MCF 10A (cell line): ENCODE measurements at regions of chr16 and their contacts with region 1.

Region 1: DNA sequence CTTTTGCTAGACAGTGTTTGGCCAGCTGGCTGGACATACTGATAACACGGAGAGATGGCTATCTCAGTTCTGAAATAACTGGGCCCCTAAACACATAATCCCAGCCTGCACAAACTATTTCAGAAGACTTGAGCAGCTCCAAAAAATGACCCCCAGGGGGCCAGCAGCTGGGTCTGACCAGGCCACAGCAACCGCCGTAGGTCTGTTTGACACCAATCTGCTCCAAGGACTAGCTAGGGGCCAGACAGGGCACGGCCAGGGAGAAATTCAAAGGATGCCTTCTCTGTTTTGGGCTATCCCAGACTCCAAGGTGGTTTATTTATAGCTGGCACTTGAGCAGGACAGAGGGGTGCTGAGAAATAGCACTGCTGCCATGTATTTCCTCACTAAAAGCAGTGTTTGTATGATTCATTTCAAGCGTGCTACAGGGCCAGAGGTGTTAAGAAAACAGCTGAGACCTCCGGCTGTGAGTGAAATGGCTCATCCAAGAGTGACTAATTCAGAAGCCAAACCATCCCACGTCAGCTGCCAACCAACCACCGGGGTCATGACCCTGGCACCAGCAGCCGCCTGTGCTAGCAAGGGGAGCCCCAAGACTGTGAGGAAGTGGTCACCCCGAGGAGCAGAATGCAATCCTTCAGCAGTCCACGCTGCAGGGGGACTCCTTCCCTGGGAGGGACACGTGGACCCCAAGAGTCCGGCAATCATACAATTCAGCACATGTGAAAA is 5.7 kb downstream of the GGA2 start:
- DNase-seq: peak; percentile 98
- H3K4me3 Mint-ChIP-seq: no peak overlapping the region
- H3K27ac Mint-ChIP-seq: peak overlapping the region; percentile 75
- H3K4me1 Mint-ChIP-seq: peaks cover 41% of the 10 kb centered on the region
- H3K27me3 Mint-ChIP-seq: no peaks in the 10 kb centered on the region
- CTCF ChIP-seq: no peak

Region 2: GRCh38 chr16:23398987-23399805 is 105.4 kb before region 1 on chr16:
- CTCF ChIA-PET with region 1: no interaction called
- POLR2A ChIA-PET with region 1: no interaction called
- intact Hi-C with region 1: no loop called
- DNase-seq: no peak
- H3K4me3 Mint-ChIP-seq: no peak overlapping the region
- H3K27ac Mint-ChIP-seq: no peak overlapping the region
- H3K4me1 Mint-ChIP-seq: peaks cover 4% of the 10 kb centered on the region
- H3K27me3 Mint-ChIP-seq: no peaks in the 10 kb centered on the region
- CTCF ChIP-seq: no peak

Region 3: DNA sequence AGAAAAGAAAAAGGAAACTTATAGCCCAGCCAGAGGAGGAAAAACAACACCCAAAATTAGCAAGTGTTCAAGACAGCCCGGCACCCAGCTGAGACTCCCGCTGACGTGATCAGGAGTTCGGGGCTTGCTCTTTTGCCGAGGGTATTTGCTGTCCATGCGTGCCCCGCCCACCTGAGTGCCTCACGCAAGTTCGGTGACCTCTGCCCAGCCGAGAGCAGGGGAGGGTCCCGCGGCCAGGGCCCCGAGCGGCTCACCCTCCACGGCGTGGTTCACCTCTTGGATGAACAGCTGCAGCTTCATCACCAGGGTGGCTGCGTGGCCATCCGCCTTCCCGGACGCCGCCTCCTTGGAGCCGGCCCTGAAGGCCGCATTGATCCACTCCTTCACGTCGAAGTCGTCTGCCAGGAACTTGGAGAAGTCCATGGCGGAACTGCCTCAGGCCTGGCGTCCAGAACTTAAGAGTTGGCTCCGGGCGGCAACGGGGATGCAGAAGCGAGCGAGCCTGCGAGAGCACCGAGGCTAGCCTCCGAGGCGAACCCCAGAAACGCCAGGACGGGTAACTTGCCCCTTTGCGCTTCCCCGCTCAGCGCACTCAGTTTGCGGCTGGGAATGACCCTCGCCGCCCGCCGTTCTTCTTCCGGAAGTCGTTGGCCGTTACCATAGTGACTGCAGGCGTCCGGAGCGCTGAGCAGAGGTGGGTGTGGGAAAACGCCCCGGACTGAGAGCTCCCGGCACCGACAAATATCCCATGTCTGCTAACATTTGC is 51.9 kb before region 1 on chr16 and contains the start of gene COG7:
- CTCF ChIA-PET with region 1: no interaction called
- POLR2A ChIA-PET with region 1: interaction called, 5 read pairs
- intact Hi-C with region 1: loop called (anchors 2 kb)
- DNase-seq: peak; percentile 82
- H3K4me3 Mint-ChIP-seq: peak within 1 kb of the TSS; percentile 90
- H3K27ac Mint-ChIP-seq: peak within 1 kb of the TSS; percentile 89
- H3K4me1 Mint-ChIP-seq: peaks cover 14% of the 10 kb centered on the region
- H3K27me3 Mint-ChIP-seq: no peaks in the 10 kb centered on the region
- CTCF ChIP-seq: no peak
- total RNA-seq, gene COG7: 10.0 and 16.7 TPM in 2 replicates

Region 4: DNA sequence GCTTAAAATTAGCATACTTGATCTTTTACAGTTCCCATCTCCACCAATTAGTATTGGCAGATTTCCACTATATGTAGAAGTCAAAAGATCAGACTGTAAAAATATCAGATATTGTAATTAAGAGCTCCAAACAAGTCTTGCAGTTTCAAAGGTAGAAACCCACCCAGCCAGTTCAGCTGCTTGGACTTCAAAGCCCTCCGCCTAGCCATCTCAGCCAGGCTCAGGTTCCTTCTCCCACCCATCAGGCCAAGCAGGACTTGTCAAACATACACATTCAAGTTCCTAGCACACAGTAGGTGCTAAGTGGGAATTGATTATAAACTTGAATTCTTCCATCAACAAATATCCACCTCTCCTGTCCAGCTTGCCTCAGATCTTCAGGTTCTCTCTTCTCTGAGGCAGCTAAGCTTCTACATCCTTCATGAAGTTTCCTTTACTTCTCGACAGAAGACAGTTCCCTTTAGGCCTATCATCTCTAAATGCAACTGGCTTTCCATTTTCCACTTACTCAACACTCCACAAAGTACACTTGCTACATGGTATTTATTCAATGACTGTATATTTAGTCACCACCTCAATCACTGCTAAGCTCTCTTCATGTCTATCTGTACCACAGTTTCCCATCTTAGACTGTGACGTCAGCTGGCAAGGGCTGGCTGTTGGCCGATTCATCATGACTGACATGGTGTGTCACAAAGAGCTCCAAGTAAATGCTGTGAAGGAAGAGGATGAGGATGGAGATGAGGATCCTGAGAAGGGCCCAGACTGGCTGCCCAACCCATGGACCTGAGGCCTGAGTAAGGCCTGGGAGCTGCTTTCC is 38.3 kb before region 1 on chr16:
- CTCF ChIA-PET with region 1: interaction called, 4 read pairs
- POLR2A ChIA-PET with region 1: interaction called, 3 read pairs
- intact Hi-C with region 1: loop called (anchors 1 kb)
- DNase-seq: peak; percentile 82
- H3K4me3 Mint-ChIP-seq: no peak overlapping the region
- H3K27ac Mint-ChIP-seq: peak overlapping the region; percentile 11
- H3K4me1 Mint-ChIP-seq: peaks cover 17% of the 10 kb centered on the region
- H3K27me3 Mint-ChIP-seq: no peaks in the 10 kb centered on the region
- CTCF ChIP-seq: no peak